K562 (cell line): ENCODE measurements at regions of chr20 and their contacts with region 1.

Region 1: DNA sequence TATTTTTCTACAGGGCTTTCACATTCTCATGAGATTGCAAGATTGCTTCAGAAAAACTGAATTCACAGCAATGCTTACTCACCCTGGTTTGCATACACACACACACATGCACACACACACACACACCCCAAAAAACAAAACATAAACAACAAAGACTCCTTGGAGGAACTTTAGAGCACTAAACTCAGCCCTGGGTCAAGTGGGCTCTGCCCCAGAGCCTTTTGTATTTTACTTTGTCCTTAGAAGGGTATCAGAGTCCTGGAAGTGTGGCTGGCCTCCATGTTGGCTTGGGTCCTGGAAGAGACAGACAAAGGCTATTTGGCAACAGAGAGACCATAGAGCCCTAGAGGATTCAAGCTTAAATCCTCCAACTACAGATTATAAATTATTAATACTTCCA is 8.0 kb upstream of the CST9 start:
- DNase-seq: no peak
- ATAC-seq: no peak
- H3K4me3 ChIP-seq: no peak overlapping the region
- H3K27ac ChIP-seq: no peak overlapping the region
- H3K4me1 ChIP-seq: no peaks in the 10 kb centered on the region
- H3K27me3 ChIP-seq: peaks cover 0 to 5% of the 10 kb centered on the region in 2 experiments; a peak in 2 of 5 replicates
- CTCF ChIP-seq: no peak
- EP300 ChIP-seq: no peak
- POLR2A ChIP-seq: no peak
- RAD21 ChIP-seq: no peak

Region 2: GRCh38 chr20:23435626-23436539 is 177.8 kb before region 1 on chr20:
- CTCF ChIA-PET with region 1: no interaction called
- POLR2A ChIA-PET with region 1: interaction called, 3 read pairs
- in situ Hi-C with region 1: loop called (anchors 10 kb)
- intact Hi-C with region 1: no loop called
- DNase-seq: no peak
- ATAC-seq: no peak
- H3K4me3 ChIP-seq: no peak overlapping the region
- H3K27ac ChIP-seq: no peak overlapping the region
- H3K4me1 ChIP-seq: peaks cover 4% of the 10 kb centered on the region in 2 experiments; a peak in 3 of 5 replicates
- H3K27me3 ChIP-seq: no peaks in the 10 kb centered on the region
- CTCF ChIP-seq: no peak
- EP300 ChIP-seq: no peak
- POLR2A ChIP-seq: no peak
- RAD21 ChIP-seq: no peak